Body of pancreas (tissue), 4 donors: ENCODE measurements at regions of chr3 and their contacts with region 1.

Region 1: GRCh38 chr3:151227807-151228665 is 25.0 kb upstream of the GPR171 start:
- DNase-seq: peak; percentile 70 to 79 (median 74)
- ATAC-seq: peak; percentile 77
- H3K4me3 ChIP-seq: no peak overlapping the region
- H3K27ac ChIP-seq: no peak overlapping the region
- H3K4me1 ChIP-seq: peaks cover 10% of the 10 kb centered on the region
- H3K27me3 ChIP-seq: no peaks in the 10 kb centered on the region
- CTCF ChIP-seq: peak; percentile 78 to 90 (median 88)
- POLR2A ChIP-seq: no peak

Region 2: GRCh38 chr3:150890298-150891230 is 337.5 kb before region 1 on chr3:
- intact Hi-C with region 1: no loop called
- DNase-seq: no peak
- ATAC-seq: no peak
- H3K4me3 ChIP-seq: no peak overlapping the region
- H3K27ac ChIP-seq: no peak overlapping the region
- H3K4me1 ChIP-seq: no peaks in the 10 kb centered on the region
- H3K27me3 ChIP-seq: no peaks in the 10 kb centered on the region
- CTCF ChIP-seq: no peak
- POLR2A ChIP-seq: no peak

Region 3: DNA sequence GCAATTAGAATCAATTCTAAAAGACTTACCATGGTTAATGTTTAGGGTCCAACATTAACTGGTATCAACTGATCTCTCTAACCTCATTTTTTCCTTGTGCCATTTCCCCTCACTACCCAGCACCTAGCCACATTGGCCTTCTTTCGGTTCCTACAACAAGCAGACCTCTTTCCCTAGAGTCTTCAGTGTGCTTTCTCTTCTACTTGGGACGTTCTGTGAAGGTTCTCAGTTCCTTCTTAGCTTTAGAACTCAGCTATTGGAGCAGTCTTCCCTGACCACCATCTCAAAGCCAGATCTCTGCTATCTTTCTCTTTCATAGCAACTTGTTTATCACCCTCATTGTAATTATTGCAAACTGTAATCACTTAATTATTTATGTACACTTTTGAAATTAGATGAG is 291.3 kb before region 1 on chr3:
- intact Hi-C with region 1: no loop called
- DNase-seq: no peak
- ATAC-seq: no peak
- H3K4me3 ChIP-seq: no peak overlapping the region
- H3K27ac ChIP-seq: no peak overlapping the region
- H3K4me1 ChIP-seq: no peaks in the 10 kb centered on the region
- H3K27me3 ChIP-seq: no peaks in the 10 kb centered on the region
- CTCF ChIP-seq: no peak
- POLR2A ChIP-seq: no peak

Region 4: DNA sequence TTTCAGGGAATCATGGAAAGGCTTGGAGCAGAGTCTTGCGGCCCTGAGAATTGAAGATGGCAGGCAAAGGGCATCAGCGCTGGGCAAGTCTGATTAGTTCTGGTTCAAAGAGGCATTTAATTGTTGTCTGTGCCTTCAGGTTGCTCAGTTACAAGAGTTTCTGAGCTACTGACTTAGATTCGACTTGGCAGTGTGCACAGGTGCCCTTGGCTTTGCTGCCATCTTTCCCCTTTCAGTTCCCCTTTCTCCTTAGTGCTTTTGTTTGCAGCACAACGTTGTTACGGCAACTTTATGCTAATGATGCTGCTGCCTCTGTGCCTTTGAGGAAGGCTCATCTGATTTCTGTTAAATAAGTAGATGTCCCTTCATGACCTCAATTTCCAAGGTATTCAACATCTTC is 37.8 kb after region 1 on chr3:
- intact Hi-C with region 1: loop called (anchors 5 kb)
- DNase-seq: peak in 1 of 4 donors; percentile 29
- ATAC-seq: no peak
- H3K4me3 ChIP-seq: no peak overlapping the region
- H3K27ac ChIP-seq: no peak overlapping the region
- H3K4me1 ChIP-seq: no peaks in the 10 kb centered on the region
- H3K27me3 ChIP-seq: no peaks in the 10 kb centered on the region
- CTCF ChIP-seq: no peak
- POLR2A ChIP-seq: no peak

Region 5: GRCh38 chr3:151289326-151289844 is 61.3 kb after region 1 on chr3:
- intact Hi-C with region 1: loop called (anchors 5 kb)
- DNase-seq: no peak
- ATAC-seq: no peak
- H3K4me3 ChIP-seq: no peak overlapping the region
- H3K27ac ChIP-seq: no peak overlapping the region
- H3K4me1 ChIP-seq: no peaks in the 10 kb centered on the region
- H3K27me3 ChIP-seq: no peaks in the 10 kb centered on the region
- CTCF ChIP-seq: no peak
- POLR2A ChIP-seq: no peak